ENCODE measurements at regions of chr7 and their contacts with region 1.

Region 1: GRCh38 chr7:45111298-45112223 is at the start of gene TBRG4:
- DNase-seq: peak; percentile 84 to 98 (median 94)
- ATAC-seq: peak; percentile 83
- H3K4me3 ChIP-seq: peak within 1 kb of the TSS; percentile 67 to 96
- H3K4me3 Mint-ChIP-seq: peak within 1 kb of the TSS; percentile 90
- H3K27ac ChIP-seq: peak within 1 kb of the TSS; percentile 94 to 99
- H3K27ac Mint-ChIP-seq: peak within 1 kb of the TSS; percentile 97
- H3K4me1 ChIP-seq: peaks cover 48% of the 10 kb centered on the region
- H3K4me1 Mint-ChIP-seq: peaks cover 48% of the 10 kb centered on the region
- H3K27me3 ChIP-seq: no peaks in the 10 kb centered on the region
- H3K27me3 Mint-ChIP-seq: no peaks in the 10 kb centered on the region
- CTCF ChIP-seq: no peak
- total RNA-seq, gene TBRG4: 75.3 to 79.7 TPM

Region 2: GRCh38 chr7:44044315-44045225 is 1067.0 kb before region 1 on chr7 and contains the start of gene DBNL:
- CTCF ChIA-PET with region 1: no interaction called
- POLR2A ChIA-PET with region 1: no interaction called
- intact Hi-C with region 1: loop called in 1 of 2 experiments (anchors 2 kb)
- DNase-seq: peak; percentile 66 to 95 (median 88)
- ATAC-seq: peak; percentile 48
- H3K4me3 ChIP-seq: peak within 1 kb of the TSS; percentile 76 to 78
- H3K4me3 Mint-ChIP-seq: peak within 1 kb of the TSS; percentile 91
- H3K27ac ChIP-seq: peak within 1 kb of the TSS; percentile 73 to 91
- H3K27ac Mint-ChIP-seq: peak within 1 kb of the TSS; percentile 97
- H3K4me1 ChIP-seq: peaks cover 49% of the 10 kb centered on the region
- H3K4me1 Mint-ChIP-seq: peaks cover 50% of the 10 kb centered on the region
- H3K27me3 ChIP-seq: no peaks in the 10 kb centered on the region
- H3K27me3 Mint-ChIP-seq: no peaks in the 10 kb centered on the region
- CTCF ChIP-seq: no peak
- total RNA-seq, gene DBNL: 82.1 to 84.8 TPM

Region 3: DNA sequence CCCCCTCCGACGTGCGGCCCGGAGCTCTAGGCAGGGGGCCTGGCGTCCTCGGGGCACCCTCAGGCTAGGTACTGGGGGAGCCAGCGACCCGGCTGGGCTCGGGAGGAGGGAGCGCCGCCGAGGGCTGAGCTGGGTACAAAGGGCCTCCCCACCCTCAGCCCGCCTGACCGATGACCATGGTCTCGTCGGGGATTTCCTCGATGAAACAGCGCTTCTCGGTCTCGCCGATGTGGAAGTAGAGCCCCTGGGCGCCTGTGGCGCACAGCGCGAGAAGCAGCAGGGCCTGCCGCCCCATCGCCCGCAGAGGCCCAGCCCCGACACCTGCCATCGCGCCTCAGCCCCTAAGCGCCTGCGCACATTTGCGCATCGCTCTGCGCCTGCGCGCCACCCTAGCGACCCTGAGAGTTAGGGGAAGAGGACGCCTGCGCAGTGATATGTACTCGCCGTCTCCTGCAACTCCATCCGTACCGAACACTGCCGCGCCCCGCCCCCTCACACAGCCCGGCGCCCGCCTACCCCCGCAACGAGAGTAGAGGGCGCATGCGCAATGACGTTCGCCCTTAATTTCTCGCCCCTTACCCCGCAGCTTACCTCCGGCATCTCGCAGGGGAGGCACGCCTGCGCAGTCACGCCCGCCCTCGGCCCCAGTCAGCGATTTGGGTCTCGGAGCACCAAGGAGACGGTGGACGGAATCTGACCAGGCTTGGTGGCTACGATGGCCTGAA is 529.5 kb before region 1 on chr7 and contains the start of gene TMED4:
- CTCF ChIA-PET with region 1: no interaction called
- POLR2A ChIA-PET with region 1: interaction called, 4 read pairs
- intact Hi-C with region 1: loop called (anchors 5 kb)
- DNase-seq: peak; percentile 100
- ATAC-seq: peak; percentile 93
- H3K4me3 ChIP-seq: peak within 1 kb of the TSS; percentile 76 to 79
- H3K4me3 Mint-ChIP-seq: peak within 1 kb of the TSS; percentile 93
- H3K27ac ChIP-seq: peak within 1 kb of the TSS; percentile 92 to 96
- H3K27ac Mint-ChIP-seq: peak within 1 kb of the TSS; percentile 98
- H3K4me1 ChIP-seq: peaks cover 26% of the 10 kb centered on the region
- H3K4me1 Mint-ChIP-seq: peaks cover 33% of the 10 kb centered on the region
- H3K27me3 ChIP-seq: no peaks in the 10 kb centered on the region
- H3K27me3 Mint-ChIP-seq: no peaks in the 10 kb centered on the region
- CTCF ChIP-seq: no peak
- total RNA-seq, gene TMED4: 115 to 120 TPM

Region 4: DNA sequence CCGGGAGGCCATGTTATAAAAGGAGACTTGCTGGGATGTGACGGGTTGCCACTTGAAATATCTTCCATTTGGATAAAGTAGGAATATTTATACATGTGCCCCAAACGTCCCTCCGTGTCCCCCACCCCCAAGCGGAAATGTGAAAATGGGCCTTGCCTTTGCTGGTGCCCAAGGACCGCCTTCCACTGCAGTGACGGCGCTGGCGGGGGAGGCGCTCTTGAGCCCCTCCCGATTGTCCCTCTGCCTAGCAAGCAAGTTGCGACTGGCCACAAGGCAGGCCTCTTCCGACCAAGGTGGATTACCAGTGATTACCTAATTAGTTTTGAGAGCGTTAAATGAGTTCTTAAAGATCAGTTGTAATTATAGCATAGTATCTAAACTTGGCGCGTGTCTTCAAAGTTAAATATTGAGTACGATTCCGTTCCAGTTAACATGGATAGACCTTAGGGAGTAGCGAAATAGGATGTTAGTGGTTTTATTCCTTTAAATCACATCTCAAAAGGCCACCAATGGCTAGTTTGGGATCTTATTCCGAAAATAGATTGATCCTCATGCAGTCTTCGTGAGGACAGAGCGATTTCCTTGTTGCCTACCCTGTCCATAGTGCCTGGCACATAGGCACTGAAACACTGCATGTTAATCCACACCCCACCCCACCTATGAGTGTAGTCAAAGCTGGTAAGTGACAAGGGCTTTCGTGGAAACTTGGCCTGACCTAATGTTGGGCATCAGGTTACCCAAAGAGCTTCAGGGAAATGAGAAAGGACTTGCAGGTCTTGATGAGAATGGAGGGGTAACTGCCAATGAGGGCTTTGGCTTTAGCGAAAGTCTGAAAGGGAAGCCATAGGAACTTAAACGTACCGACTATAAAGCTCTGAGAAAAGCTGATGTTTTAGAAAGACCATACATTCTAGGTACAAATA is 314.0 kb before region 1 on chr7:
- CTCF ChIA-PET with region 1: no interaction called
- POLR2A ChIA-PET with region 1: interaction called, 3 read pairs
- intact Hi-C with region 1: loop called in 1 of 2 experiments (anchors 5 kb)
- DNase-seq: peak; percentile 64 to 92 (median 82)
- ATAC-seq: peak; percentile 61
- H3K4me3 ChIP-seq: peak overlapping the region; percentile 97 to 98
- H3K4me3 Mint-ChIP-seq: peak overlapping the region; percentile 92
- H3K27ac ChIP-seq: peak overlapping the region; percentile 97 to 99
- H3K27ac Mint-ChIP-seq: peak overlapping the region; percentile 96
- H3K4me1 ChIP-seq: peaks cover 22% of the 10 kb centered on the region
- H3K4me1 Mint-ChIP-seq: peaks cover 44% of the 10 kb centered on the region
- H3K27me3 ChIP-seq: no peaks in the 10 kb centered on the region
- H3K27me3 Mint-ChIP-seq: no peaks in the 10 kb centered on the region
- CTCF ChIP-seq: no peak

Region 5: DNA sequence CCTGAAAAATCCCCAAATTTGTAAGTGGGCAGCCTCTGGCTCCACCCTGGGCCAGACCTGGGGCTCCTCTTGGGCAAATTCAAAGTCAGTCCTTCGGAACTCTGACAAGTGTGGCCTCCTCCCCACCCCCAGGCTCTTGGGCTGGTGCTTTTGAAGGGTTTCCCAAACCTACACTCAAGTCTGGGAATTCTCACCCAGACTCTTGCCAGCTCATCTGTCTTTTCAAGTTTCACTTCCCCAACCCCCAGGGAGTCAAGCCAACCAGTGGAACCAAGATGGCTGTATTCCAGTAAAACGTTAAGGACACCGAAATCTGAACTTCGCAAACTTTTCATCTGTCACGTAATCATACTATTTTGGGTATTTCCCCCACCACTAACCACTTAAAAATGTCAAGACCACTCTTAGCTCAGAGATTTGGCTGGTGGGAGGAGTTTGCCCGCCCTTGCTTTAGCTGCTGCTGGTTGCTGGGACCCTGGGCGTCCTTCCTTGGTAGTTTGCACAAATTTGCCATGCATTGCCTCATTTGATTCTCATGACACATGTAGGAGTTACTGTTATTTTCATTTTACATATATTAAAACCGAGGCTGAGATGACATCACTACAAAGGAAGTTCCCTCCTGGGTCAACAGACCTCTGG is 131.0 kb before region 1 on chr7:
- CTCF ChIA-PET with region 1: no interaction called
- POLR2A ChIA-PET with region 1: interaction called, 11 read pairs
- intact Hi-C with region 1: loop called in 1 of 2 experiments (anchors 1 kb)
- DNase-seq: peak in 6 of 9 experiments; percentile 40 to 95 (median 76)
- ATAC-seq: peak; percentile 43
- H3K4me3 ChIP-seq: no peak overlapping the region
- H3K4me3 Mint-ChIP-seq: peak overlapping the region; percentile 94
- H3K27ac ChIP-seq: peak overlapping the region; percentile 78 to 86
- H3K27ac Mint-ChIP-seq: peak overlapping the region; percentile 99
- H3K4me1 ChIP-seq: peaks cover 72% of the 10 kb centered on the region
- H3K4me1 Mint-ChIP-seq: peaks cover 80% of the 10 kb centered on the region
- H3K27me3 ChIP-seq: no peaks in the 10 kb centered on the region
- H3K27me3 Mint-ChIP-seq: no peaks in the 10 kb centered on the region
- CTCF ChIP-seq: no peak

Region 6: DNA sequence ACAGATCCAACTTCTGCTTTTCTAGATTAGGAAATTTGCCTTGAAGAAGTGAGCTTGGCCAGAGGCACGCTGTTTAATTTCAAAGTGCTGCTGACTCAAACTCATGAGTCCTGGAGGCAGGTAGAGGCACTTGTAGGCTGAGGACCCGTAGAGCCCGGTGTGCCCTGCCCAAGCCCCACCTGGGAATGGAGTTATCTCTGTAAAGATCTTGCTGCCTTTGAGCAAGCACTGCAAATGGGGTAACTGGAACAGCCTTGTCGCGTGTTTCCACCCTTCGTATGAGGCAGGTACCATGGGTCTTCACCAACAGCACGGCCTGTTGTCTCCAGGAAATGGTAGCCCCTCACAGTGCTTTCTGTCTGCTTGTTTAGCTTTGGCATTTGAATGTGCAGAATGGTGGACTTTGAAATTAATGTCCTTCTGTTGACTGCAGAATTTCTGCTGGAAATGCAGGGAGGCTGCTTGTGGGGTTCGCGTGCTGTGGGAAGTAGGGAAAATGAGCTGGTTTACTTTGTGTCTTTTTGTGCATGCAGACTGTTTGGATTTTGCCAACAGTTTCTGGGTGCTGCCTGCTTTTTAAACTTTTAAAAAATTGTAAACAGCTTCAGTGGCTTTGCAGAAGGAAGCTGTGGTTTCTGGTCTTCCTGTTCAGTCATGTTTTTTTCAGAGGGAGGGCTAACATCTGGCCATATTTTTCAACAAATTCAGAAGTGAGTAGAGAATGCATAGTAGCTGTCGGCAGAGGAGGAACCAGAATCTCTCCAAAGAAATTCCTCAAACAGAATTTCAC is 84.4 kb before region 1 on chr7:
- CTCF ChIA-PET with region 1: interaction called, 3 read pairs
- POLR2A ChIA-PET with region 1: interaction called, 10 read pairs
- intact Hi-C with region 1: loop called in 1 of 2 experiments (anchors 1 kb)
- DNase-seq: peak in 7 of 9 experiments; percentile 26 to 75 (median 46)
- ATAC-seq: peak; percentile 63
- H3K4me3 ChIP-seq: peak overlapping the region; percentile 74 to 81
- H3K4me3 Mint-ChIP-seq: peak overlapping the region; percentile 87
- H3K27ac ChIP-seq: peak overlapping the region; percentile 73 to 80
- H3K27ac Mint-ChIP-seq: peak overlapping the region; percentile 91
- H3K4me1 ChIP-seq: peaks cover 42% of the 10 kb centered on the region
- H3K4me1 Mint-ChIP-seq: peaks cover 64% of the 10 kb centered on the region
- H3K27me3 ChIP-seq: no peaks in the 10 kb centered on the region
- H3K27me3 Mint-ChIP-seq: no peaks in the 10 kb centered on the region
- CTCF ChIP-seq: no peak

Region 7: GRCh38 chr7:45171946-45172345 is 60.4 kb after region 1 on chr7:
- CTCF ChIA-PET with region 1: no interaction called
- POLR2A ChIA-PET with region 1: no interaction called
- intact Hi-C with region 1: no loop called
- DNase-seq: no peak
- ATAC-seq: no peak
- H3K4me3 ChIP-seq: no peak overlapping the region
- H3K4me3 Mint-ChIP-seq: no peak overlapping the region
- H3K27ac ChIP-seq: no peak overlapping the region
- H3K27ac Mint-ChIP-seq: no peak overlapping the region
- H3K4me1 ChIP-seq: no peaks in the 10 kb centered on the region
- H3K4me1 Mint-ChIP-seq: no peaks in the 10 kb centered on the region
- H3K27me3 ChIP-seq: no peaks in the 10 kb centered on the region
- H3K27me3 Mint-ChIP-seq: peaks cover 4% of the 10 kb centered on the region
- CTCF ChIP-seq: no peak

Measured in CD8-positive, alpha-beta T cell (primary cell).